Gastrocnemius medialis (tissue), 4 donors: ENCODE measurements at regions of chr17 and their contacts with region 1.

Region 1: GRCh38 chr17:27353461-27354050 is 59.6 kb downstream of the WSB1 start:
- DNase-seq: peak; percentile 69 to 84
- ATAC-seq: peak; percentile 83 to 85
- H3K4me3 ChIP-seq: peak overlapping the region; percentile 62 to 66 (median 65)
- H3K27ac ChIP-seq: peak overlapping the region; percentile 79 to 88 (median 84)
- H3K4me1 ChIP-seq: peaks cover 11 to 16% of the 10 kb centered on the region in 2 donors
- H3K27me3 ChIP-seq: no peaks in the 10 kb centered on the region
- CTCF ChIP-seq: peak; percentile 78 to 100 (median 99)
- POLR2A ChIP-seq: peak; percentile 79 to 89

Region 2: GRCh38 chr17:27245230-27245696 is 108.3 kb before region 1 on chr17:
- in situ Hi-C with region 1: no loop called
- intact Hi-C with region 1: loop called (anchors 1 kb)
- DNase-seq: peak; percentile 66 to 88
- ATAC-seq: peak; percentile 73 to 82
- H3K4me3 ChIP-seq: peak overlapping the region in 3 of 4 donors; percentile 12 to 41 (median 41)
- H3K27ac ChIP-seq: peak overlapping the region; percentile 63 to 87 (median 81)
- H3K4me1 ChIP-seq: peaks cover 19 to 27% of the 10 kb centered on the region in 2 donors
- H3K27me3 ChIP-seq: no peaks in the 10 kb centered on the region
- CTCF ChIP-seq: peak; percentile 59 to 79 (median 70)
- POLR2A ChIP-seq: no peak

Region 3: DNA sequence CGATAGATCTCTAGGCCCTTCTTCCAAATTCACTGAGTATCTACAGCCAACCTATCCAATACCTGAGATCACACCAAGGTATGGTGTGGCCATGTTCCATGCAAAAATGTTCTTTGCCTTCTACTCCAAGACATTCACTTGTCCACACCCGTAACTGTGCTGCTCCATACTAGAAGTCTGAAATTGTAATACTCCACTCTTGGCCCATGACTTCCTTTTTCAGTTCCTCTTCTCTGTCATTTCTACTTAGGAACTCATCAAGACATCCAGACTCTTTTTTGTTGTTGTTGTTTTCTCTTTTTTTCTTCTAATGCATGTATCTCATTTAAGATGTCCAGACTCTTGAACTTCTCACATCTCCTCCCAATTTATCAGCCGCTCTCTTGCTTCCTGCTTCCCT is 60.2 kb after region 1 on chr17:
- in situ Hi-C with region 1: no loop called
- intact Hi-C with region 1: no loop called
- DNase-seq: no peak
- ATAC-seq: no peak
- H3K4me3 ChIP-seq: no peak overlapping the region
- H3K27ac ChIP-seq: no peak overlapping the region
- H3K4me1 ChIP-seq: no peaks in the 10 kb centered on the region
- H3K27me3 ChIP-seq: no peaks in the 10 kb centered on the region
- CTCF ChIP-seq: no peak
- POLR2A ChIP-seq: no peak

Region 4: GRCh38 chr17:27455914-27456680 is 102.5 kb after region 1 on chr17 and contains the start of gene KSR1:
- in situ Hi-C with region 1: loop called in 2 of 4 experiments (anchors 25 kb)
- intact Hi-C with region 1: loop called (anchors 1 kb)
- DNase-seq: peak; percentile 44 to 67
- ATAC-seq: peak; percentile 86 to 91
- H3K4me3 ChIP-seq: peak within 1 kb of the TSS; percentile 73 to 92 (median 86)
- H3K27ac ChIP-seq: peak within 1 kb of the TSS; percentile 71 to 82 (median 78)
- H3K4me1 ChIP-seq: peaks cover 4 to 10% of the 10 kb centered on the region in 2 donors
- H3K27me3 ChIP-seq: no peaks in the 10 kb centered on the region
- CTCF ChIP-seq: peak in 3 of 5 experiments; percentile 34 to 44 (median 38)
- POLR2A ChIP-seq: peak; percentile 69 to 89
- total RNA-seq, gene KSR1: 10.4 to 17.7 (median 13.2) TPM

Region 5: GRCh38 chr17:27578718-27579085 is 225.1 kb after region 1 on chr17:
- in situ Hi-C with region 1: no loop called
- intact Hi-C with region 1: loop called (anchors 5 kb)
- DNase-seq: peak in 1 of 2 donors; percentile 65
- ATAC-seq: peak; percentile 18 to 24
- H3K4me3 ChIP-seq: peak overlapping the region in 2 of 4 donors; percentile 4 to 37
- H3K27ac ChIP-seq: peak overlapping the region; percentile 88 to 99 (median 96)
- H3K4me1 ChIP-seq: peaks cover 41 to 73% of the 10 kb centered on the region in 2 donors
- H3K27me3 ChIP-seq: no peaks in the 10 kb centered on the region
- CTCF ChIP-seq: no peak
- POLR2A ChIP-seq: no peak

Region 6: GRCh38 chr17:27892866-27893769 is 539.6 kb after region 1 on chr17 and contains the start of gene LYRM9:
- in situ Hi-C with region 1: loop called in 1 of 4 experiments (anchors 25 kb)
- intact Hi-C with region 1: no loop called
- DNase-seq: peak; percentile 75 to 88
- ATAC-seq: peak; percentile 96 to 97
- H3K4me3 ChIP-seq: peak within 1 kb of the TSS; percentile 66 to 91 (median 85)
- H3K27ac ChIP-seq: peak within 1 kb of the TSS; percentile 84 to 88 (median 86)
- H3K4me1 ChIP-seq: peaks cover 6 to 7% of the 10 kb centered on the region in 2 donors
- H3K27me3 ChIP-seq: no peaks in the 10 kb centered on the region
- CTCF ChIP-seq: peak; percentile 81 to 98 (median 90)
- POLR2A ChIP-seq: peak; percentile 21 to 30
- total RNA-seq, gene LYRM9: 5.9 to 37.2 (median 9.6) TPM